BJ (cell line): ENCODE measurements at regions of chr12 and their contacts with region 1.

Region 1: DNA sequence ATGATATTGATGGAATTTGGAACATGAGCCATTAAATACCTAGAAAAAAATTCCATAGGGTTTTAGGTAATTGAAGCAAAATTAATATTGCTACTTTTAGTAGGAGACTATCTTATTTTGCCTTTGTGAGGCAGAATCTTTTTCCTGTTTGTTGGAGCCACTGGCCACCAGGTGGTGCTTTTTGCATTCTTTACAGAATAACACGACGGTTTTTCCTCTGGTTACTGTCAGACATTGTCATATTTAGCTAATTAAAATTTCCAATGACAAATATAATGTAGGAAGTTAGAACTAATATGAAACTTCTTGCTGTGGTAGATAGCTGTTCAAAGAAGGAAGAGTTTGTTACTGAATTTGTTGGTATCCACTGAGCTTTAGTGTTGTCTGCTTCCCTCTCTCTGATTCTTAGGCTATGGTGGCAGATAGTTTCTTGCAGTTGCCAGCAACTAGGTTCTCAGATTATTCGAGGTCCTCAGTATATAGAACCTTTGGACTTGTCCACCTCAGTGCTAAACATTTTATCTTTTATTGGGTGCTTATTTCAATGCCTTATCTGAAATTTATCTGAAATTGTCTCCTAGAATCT is 25.7 kb downstream of the RAB21 start:
- DNase-seq: no peak
- H3K4me3 ChIP-seq: no peak overlapping the region
- H3K27me3 ChIP-seq: no peaks in the 10 kb centered on the region
- CTCF ChIP-seq: peak; percentile 73

Region 2: GRCh38 chr12:71768900-71769299 is 11.4 kb before region 1 on chr12:
- CTCF ChIA-PET with region 1: interaction called, 10 read pairs
- POLR2A ChIA-PET with region 1: no interaction called
- DNase-seq: no peak
- H3K4me3 ChIP-seq: no peak overlapping the region
- H3K27me3 ChIP-seq: no peaks in the 10 kb centered on the region
- CTCF ChIP-seq: no peak